CD4-positive, alpha-beta memory T cell (primary cell): ENCODE measurements at regions of chr9 and their contacts with region 1.

Region 1: GRCh38 chr9:108953983-108954574 is 19.9 kb downstream of the ABITRAM start:
- DNase-seq: peak in 4 of 5 donors; percentile 23 to 28 (median 26)
- H3K4me3 ChIP-seq: no peak overlapping the region
- H3K4me3 Mint-ChIP-seq: no peak overlapping the region
- H3K27ac ChIP-seq: no peak overlapping the region
- H3K27ac Mint-ChIP-seq: no peak overlapping the region
- H3K4me1 ChIP-seq: no peaks in the 10 kb centered on the region
- H3K4me1 Mint-ChIP-seq: no peaks in the 10 kb centered on the region
- H3K27me3 ChIP-seq: no peaks in the 10 kb centered on the region
- H3K27me3 Mint-ChIP-seq: no peaks in the 10 kb centered on the region

Region 2: DNA sequence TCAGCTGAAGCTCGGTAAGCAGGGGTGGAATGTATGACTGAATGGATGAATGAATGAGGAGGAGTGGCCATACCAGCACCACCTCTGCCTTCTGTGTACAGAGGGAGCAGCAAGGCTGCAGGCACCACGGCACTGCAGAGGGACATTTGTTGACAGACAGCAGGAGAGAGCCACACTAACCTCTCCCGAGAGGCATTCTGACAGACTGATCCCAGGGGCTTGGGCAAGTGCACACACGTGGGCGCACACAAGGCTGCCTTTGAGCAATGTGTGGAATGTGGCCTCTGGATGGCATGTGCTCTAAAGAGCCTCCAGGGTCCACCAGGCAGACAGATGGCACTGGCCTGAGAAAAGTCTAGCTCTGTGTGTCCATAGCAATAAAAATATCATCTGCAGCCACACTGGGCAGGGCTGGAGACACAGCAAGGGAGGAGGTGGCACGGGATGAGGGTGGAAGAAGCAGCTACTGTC is 210.1 kb before region 1 on chr9:
- CTCF ChIA-PET with region 1: no interaction called
- POLR2A ChIA-PET with region 1: no interaction called
- intact Hi-C with region 1: loop called (anchors 5 kb)
- DNase-seq: no peak
- H3K4me3 ChIP-seq: no peak overlapping the region
- H3K4me3 Mint-ChIP-seq: no peak overlapping the region
- H3K27ac ChIP-seq: no peak overlapping the region
- H3K27ac Mint-ChIP-seq: no peak overlapping the region
- H3K4me1 ChIP-seq: no peaks in the 10 kb centered on the region
- H3K4me1 Mint-ChIP-seq: no peaks in the 10 kb centered on the region
- H3K27me3 ChIP-seq: no peaks in the 10 kb centered on the region
- H3K27me3 Mint-ChIP-seq: no peaks in the 10 kb centered on the region

Region 3: DNA sequence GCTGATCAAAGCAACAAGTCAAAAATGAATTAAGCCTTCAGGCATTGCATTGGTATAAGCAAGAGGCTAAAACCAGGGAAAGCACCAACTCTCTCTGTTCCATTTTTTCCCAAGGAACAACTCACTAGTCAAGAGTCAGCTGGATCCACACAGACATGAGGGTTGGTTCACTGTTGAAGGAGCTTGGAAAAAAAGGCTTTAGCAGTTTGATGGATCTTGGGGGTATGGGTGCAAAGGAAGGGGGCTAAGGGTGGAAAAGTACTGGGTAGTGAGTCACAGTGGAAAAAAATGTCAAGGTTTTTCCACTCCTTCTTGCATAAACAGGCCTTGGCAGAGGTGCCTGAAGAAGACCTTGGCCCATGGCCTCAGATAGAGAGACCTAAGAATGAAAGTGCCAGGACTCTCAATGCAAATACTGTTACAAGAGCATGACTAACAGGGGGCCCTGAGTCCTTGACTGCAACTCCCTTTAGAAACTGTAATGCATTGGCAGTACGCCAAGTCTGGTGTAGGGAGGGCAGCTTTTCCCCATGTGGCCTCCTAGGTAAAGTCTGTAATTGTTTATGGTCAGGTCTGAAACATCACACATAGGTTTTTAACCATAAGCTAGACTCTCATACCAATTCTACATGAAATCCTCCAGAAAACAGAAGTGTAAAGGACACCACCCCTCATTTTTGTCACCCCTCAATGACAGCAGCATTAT is 68.3 kb before region 1 on chr9:
- CTCF ChIA-PET with region 1: interaction called, 7 read pairs
- POLR2A ChIA-PET with region 1: no interaction called
- intact Hi-C with region 1: loop called (anchors 2 kb)
- DNase-seq: no peak
- H3K4me3 ChIP-seq: no peak overlapping the region
- H3K4me3 Mint-ChIP-seq: no peak overlapping the region
- H3K27ac ChIP-seq: no peak overlapping the region
- H3K27ac Mint-ChIP-seq: no peak overlapping the region
- H3K4me1 ChIP-seq: no peaks in the 10 kb centered on the region
- H3K4me1 Mint-ChIP-seq: peaks cover 0 to 2% (median 0%) of the 10 kb centered on the region in 4 donors
- H3K27me3 ChIP-seq: no peaks in the 10 kb centered on the region
- H3K27me3 Mint-ChIP-seq: no peaks in the 10 kb centered on the region

Region 4: DNA sequence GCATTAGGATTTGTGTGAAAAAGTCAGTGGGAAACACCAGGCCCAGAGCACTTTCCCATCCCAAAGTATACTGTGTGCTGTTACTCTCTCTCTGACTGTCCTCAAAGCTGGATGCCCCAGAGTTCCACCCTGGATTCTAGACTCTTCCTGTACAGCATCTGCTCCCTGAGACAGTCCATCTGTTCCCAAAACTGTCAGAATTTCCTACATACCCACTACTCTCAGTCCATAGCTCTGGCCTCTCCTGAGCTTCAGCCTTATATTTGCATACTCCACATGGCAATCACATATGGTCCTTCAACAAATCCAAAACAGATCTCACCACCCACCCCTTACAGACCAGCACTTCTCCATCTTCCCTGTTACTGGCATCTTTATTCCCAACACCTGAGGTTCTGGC is 29.6 kb before region 1 on chr9:
- CTCF ChIA-PET with region 1: interaction called, 15 read pairs
- POLR2A ChIA-PET with region 1: no interaction called
- intact Hi-C with region 1: no loop called
- DNase-seq: no peak
- H3K4me3 ChIP-seq: no peak overlapping the region
- H3K4me3 Mint-ChIP-seq: no peak overlapping the region
- H3K27ac ChIP-seq: no peak overlapping the region
- H3K27ac Mint-ChIP-seq: peak overlapping the region in 4 of 7 donors; percentile 24 to 72 (median 28)
- H3K4me1 ChIP-seq: no peaks in the 10 kb centered on the region
- H3K4me1 Mint-ChIP-seq: peaks cover 0 to 8% (median 6%) of the 10 kb centered on the region in 4 donors
- H3K27me3 ChIP-seq: no peaks in the 10 kb centered on the region
- H3K27me3 Mint-ChIP-seq: no peaks in the 10 kb centered on the region

Region 5: GRCh38 chr9:109012876-109013678 is 59.0 kb after region 1 on chr9 and contains the start of gene CTNNAL1:
- CTCF ChIA-PET with region 1: interaction called, 4 read pairs
- POLR2A ChIA-PET with region 1: no interaction called
- intact Hi-C with region 1: loop called (anchors 5 kb)
- DNase-seq: peak; percentile 82 to 91 (median 83)
- H3K4me3 ChIP-seq: peak within 1 kb of the TSS; percentile 66
- H3K4me3 Mint-ChIP-seq: peak within 1 kb of the TSS; percentile 93 to 100 (median 96)
- H3K27ac ChIP-seq: peak within 1 kb of the TSS; percentile 61
- H3K27ac Mint-ChIP-seq: peak within 1 kb of the TSS; percentile 93 to 99 (median 95)
- H3K4me1 ChIP-seq: peaks cover 13% of the 10 kb centered on the region
- H3K4me1 Mint-ChIP-seq: peaks cover 17 to 31% (median 28%) of the 10 kb centered on the region in 4 donors
- H3K27me3 ChIP-seq: no peaks in the 10 kb centered on the region
- H3K27me3 Mint-ChIP-seq: no peaks in the 10 kb centered on the region
- total RNA-seq, gene CTNNAL1: 2.6 to 3.3 TPM